ENCODE measurements at regions of chr6 and their contacts with region 1.

Region 1: GRCh38 chr6:71190809-71191208 is 97.8 kb upstream of the OGFRL1 start:
- DNase-seq: peak; percentile 74
- H3K4me3 ChIP-seq: no peak overlapping the region
- H3K27ac ChIP-seq: no peak overlapping the region
- H3K4me1 ChIP-seq: peaks cover 13% of the 10 kb centered on the region
- H3K27me3 ChIP-seq: no peaks in the 10 kb centered on the region

Region 2: GRCh38 chr6:71349395-71349794 is 158.6 kb after region 1 on chr6:
- in situ Hi-C with region 1: loop called (anchors 5 kb)
- DNase-seq: peak; percentile 63
- H3K4me3 ChIP-seq: no peak overlapping the region; the same call in 1 of the 2 replicates
- H3K27ac ChIP-seq: peak overlapping the region; percentile 81
- H3K4me1 ChIP-seq: peaks cover 24% of the 10 kb centered on the region
- H3K27me3 ChIP-seq: no peaks in the 10 kb centered on the region

Measured in GM23248 (cell line).